Endothelial cell of umbilical vein (primary cell): ENCODE measurements at regions of chr14 and their contacts with region 1.

Region 1: GRCh38 chr14:94363151-94363624 is 25.2 kb downstream of the SERPINA1 start:
- DNase-seq: no peak
- H3K4me3 ChIP-seq: no peak overlapping the region
- H3K27ac ChIP-seq: no peak overlapping the region
- H3K4me1 ChIP-seq: no peaks in the 10 kb centered on the region
- H3K27me3 ChIP-seq: no peaks in the 10 kb centered on the region
- CTCF ChIP-seq: no peak
- POLR2A ChIP-seq: no peak

Region 2: DNA sequence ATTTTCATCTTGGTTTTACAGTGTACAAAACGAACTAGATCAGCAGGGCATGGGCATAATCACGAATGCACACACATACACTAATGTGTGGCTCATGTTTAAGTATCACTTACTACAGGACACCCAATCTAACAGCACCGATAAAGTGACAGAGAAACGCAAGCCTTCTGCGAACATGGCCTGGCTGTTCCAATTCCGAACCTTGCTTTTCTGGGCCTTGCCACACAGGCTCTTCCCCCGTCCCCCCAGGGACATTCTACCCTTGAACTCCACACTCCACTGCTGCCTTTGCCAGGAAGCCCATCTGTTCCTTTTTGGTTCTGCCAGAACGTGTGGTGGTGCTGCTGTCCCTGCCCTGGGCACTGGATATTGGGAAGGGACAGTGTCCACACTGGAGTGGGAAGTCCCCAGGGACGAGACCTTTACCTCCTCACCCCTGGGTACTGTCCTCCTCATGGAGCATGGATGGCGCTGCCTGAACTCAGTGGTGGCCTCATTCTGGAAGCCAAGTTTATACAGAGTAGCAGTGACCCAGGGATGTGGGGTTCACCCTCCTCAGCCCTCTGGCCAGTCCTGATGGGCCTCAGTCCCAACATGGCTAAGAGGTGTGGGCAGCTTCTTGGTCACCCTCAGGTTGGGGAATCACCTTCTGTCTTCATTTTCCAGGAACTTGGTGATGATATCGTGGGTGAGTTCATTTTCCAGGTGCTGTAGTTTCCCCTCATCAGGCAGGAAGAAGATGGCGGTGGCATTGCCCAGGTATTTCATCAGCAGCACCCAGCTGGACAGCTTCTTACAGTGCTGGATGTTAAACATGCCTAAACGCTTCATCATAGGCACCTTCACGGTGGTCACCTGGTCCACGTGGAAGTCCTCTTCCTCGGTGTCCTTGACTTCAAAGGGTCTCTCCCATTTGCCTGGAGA is 17.3 kb after region 1 on chr14:
- CTCF ChIA-PET with region 1: no interaction called
- POLR2A ChIA-PET with region 1: no interaction called
- dilution Hi-C with region 1: no loop called
- intact Hi-C with region 1: loop called (anchors 1 kb)
- DNase-seq: no peak
- H3K4me3 ChIP-seq: no peak overlapping the region
- H3K27ac ChIP-seq: no peak overlapping the region
- H3K4me1 ChIP-seq: no peaks in the 10 kb centered on the region
- H3K27me3 ChIP-seq: no peaks in the 10 kb centered on the region
- CTCF ChIP-seq: no peak
- POLR2A ChIP-seq: no peak